ENCODE measurements at regions of chr11 and their contacts with region 1.

Region 1: GRCh38 chr11:66842896-66843775 is at the start of gene RCE1:
- DNase-seq: peak; percentile 86 to 96 (median 91)
- ATAC-seq: peak; percentile 96
- H3K4me3 ChIP-seq: peak within 1 kb of the TSS; percentile 94
- H3K4me3 Mint-ChIP-seq: peak within 1 kb of the TSS; percentile 87 to 97 (median 93)
- H3K27ac ChIP-seq: peak within 1 kb of the TSS; percentile 96
- H3K27ac Mint-ChIP-seq: peak within 1 kb of the TSS; percentile 74 to 97 (median 92)
- H3K4me1 ChIP-seq: peaks cover 31 to 47% of the 10 kb centered on the region in 2 donors
- H3K4me1 Mint-ChIP-seq: peaks cover 31 to 58% (median 47%) of the 10 kb centered on the region in 7 donors
- H3K27me3 ChIP-seq: no peaks in the 10 kb centered on the region
- H3K27me3 Mint-ChIP-seq: no peaks in the 10 kb centered on the region
- total RNA-seq, gene RCE1: 24.6 to 47.1 (median 33.6) TPM

Region 2: GRCh38 chr11:65802841-65803240 is 1040.3 kb before region 1 on chr11:
- CTCF ChIA-PET with region 1: no interaction called
- POLR2A ChIA-PET with region 1: no interaction called
- intact Hi-C with region 1: no loop called
- DNase-seq: no peak
- ATAC-seq: no peak
- H3K4me3 ChIP-seq: no peak overlapping the region
- H3K4me3 Mint-ChIP-seq: no peak overlapping the region
- H3K27ac ChIP-seq: no peak overlapping the region
- H3K27ac Mint-ChIP-seq: no peak overlapping the region
- H3K4me1 ChIP-seq: no peaks in the 10 kb centered on the region
- H3K4me1 Mint-ChIP-seq: peaks cover 0 to 6% (median 0%) of the 10 kb centered on the region in 7 donors
- H3K27me3 ChIP-seq: peaks cover 3 to 9% of the 10 kb centered on the region in 2 donors
- H3K27me3 Mint-ChIP-seq: peaks cover 14 to 40% (median 37%) of the 10 kb centered on the region in 5 donors

Region 3: DNA sequence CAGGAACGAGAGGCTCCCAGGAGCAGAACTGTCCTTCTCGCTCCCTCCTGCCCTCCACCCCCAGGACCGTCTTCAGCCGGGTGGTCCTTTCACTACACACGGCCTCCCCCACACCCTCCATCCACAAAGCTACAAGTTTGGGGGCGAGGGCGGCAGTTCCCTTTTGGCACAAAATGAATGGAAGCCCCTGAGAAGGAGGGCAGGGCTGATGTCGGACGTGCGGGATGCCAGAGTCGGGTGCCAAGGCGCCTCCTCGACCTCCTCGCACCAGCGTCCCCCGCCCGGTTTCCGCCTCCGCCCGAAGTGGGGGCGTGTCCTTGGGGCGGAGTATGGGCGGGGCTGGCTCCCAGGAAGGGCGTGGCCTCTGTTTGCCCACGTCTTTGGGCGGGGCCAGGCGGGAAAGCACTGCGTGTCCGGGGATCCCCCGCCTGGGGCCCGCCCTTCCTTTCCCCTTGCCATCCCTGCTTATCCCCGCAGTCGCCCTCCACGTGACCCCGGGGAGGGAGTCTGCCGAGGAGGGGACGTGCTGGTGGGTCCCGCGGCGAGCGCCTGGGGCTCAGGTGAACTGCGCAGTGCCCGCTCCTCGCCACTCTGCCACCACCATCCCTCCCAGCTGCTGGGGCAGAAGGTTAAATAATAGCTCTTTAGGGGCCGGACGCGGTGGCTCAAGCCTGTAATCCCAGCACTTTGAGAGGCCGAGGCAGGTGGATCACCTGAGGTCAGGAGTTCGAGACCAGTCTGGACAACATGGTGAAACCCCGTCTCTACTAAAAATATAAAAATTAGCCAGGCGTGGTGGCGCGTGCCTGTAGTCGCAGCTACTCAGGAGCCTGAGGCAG is 969.6 kb before region 1 on chr11:
- CTCF ChIA-PET with region 1: no interaction called
- POLR2A ChIA-PET with region 1: no interaction called
- intact Hi-C with region 1: loop called in 1 of 2 experiments (anchors 5 kb)
- DNase-seq: peak; percentile 93 to 100 (median 97)
- ATAC-seq: peak; percentile 99
- H3K4me3 ChIP-seq: peak overlapping the region; percentile 75
- H3K4me3 Mint-ChIP-seq: peak overlapping the region; percentile 84 to 97 (median 91)
- H3K27ac ChIP-seq: peak overlapping the region; percentile 88
- H3K27ac Mint-ChIP-seq: peak overlapping the region; percentile 71 to 92 (median 91)
- H3K4me1 ChIP-seq: peaks cover 10 to 22% of the 10 kb centered on the region in 2 donors
- H3K4me1 Mint-ChIP-seq: peaks cover 7 to 37% (median 18%) of the 10 kb centered on the region in 7 donors
- H3K27me3 ChIP-seq: no peaks in the 10 kb centered on the region
- H3K27me3 Mint-ChIP-seq: peaks cover 0 to 3% (median 0%) of the 10 kb centered on the region in 5 donors

Region 4: GRCh38 chr11:66638177-66639065 is 204.7 kb before region 1 on chr11 and contains the start of gene RBM4:
- CTCF ChIA-PET with region 1: no interaction called
- POLR2A ChIA-PET with region 1: interaction called, 4 read pairs
- intact Hi-C with region 1: loop called in 1 of 2 experiments (anchors 1 kb)
- DNase-seq: peak; percentile 80 to 99 (median 98)
- ATAC-seq: peak; percentile 93
- H3K4me3 ChIP-seq: peak within 1 kb of the TSS; percentile 91
- H3K4me3 Mint-ChIP-seq: peak within 1 kb of the TSS; percentile 92 to 100 (median 94)
- H3K27ac ChIP-seq: peak within 1 kb of the TSS; percentile 93
- H3K27ac Mint-ChIP-seq: peak within 1 kb of the TSS; percentile 87 to 98 (median 96)
- H3K4me1 ChIP-seq: peaks cover 44 to 48% of the 10 kb centered on the region in 2 donors
- H3K4me1 Mint-ChIP-seq: peaks cover 45 to 73% (median 68%) of the 10 kb centered on the region in 7 donors
- H3K27me3 ChIP-seq: no peaks in the 10 kb centered on the region
- H3K27me3 Mint-ChIP-seq: no peaks in the 10 kb centered on the region
- total RNA-seq, gene RBM4: 139 to 239 (median 198) TPM

Region 5: DNA sequence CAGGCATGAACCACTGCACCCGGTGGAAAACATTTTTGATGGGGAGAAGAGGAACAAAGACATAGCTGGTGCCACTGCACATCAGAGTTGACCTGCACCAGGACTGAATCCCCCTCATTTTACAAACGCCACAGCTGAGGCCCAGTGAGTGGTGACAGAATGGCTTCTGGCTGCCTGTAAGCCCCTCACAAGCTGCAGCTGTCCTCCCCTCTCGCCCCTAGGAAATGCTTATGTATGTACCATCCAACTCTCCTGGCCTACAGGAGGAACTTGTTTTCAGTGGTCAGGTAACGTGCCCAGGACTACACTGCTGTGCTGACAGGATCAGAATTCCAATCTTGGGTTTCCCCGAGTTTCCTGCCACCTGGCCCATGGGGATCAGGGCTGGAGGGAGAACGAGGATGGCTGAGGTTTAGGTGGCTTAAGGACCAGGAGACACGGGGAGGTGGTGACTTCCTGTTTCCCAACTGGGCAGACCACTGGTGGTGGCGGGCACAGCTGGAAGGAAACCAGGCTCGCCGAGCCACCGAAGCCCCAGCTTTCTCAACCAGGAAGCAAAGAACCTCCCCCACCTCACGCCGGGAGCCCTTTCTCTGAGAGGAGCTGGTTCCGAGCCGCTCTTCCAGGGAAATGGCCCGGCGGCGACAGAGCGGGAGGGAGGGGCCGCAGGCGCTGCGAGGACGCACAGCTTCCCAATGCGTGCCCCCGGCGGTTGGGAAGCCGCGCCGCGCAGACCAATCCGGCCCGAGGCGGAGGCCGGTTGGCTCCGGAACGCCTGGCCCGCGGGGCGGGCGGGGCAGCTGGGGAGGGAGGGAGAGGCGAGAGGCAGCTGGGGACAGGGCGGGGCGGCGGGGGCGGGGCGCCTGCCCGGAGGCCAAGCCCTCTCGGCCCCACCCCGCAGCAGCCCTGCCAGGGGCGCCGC is 12.7 kb after region 1 on chr11:
- CTCF ChIA-PET with region 1: interaction called, 4 read pairs
- POLR2A ChIA-PET with region 1: interaction called, 47 read pairs
- intact Hi-C with region 1: loop called (anchors 1 kb)
- DNase-seq: peak in 3 of 9 donors; percentile 17 to 91 (median 55)
- ATAC-seq: peak; percentile 85
- H3K4me3 ChIP-seq: peak overlapping the region; percentile 71
- H3K4me3 Mint-ChIP-seq: peak overlapping the region; percentile 71 to 89 (median 85)
- H3K27ac ChIP-seq: peak overlapping the region; percentile 14
- H3K27ac Mint-ChIP-seq: peak overlapping the region in 6 of 9 donors; percentile 28 to 90 (median 54)
- H3K4me1 ChIP-seq: peaks cover 0 to 6% of the 10 kb centered on the region in 2 donors
- H3K4me1 Mint-ChIP-seq: peaks cover 0 to 26% (median 9%) of the 10 kb centered on the region in 7 donors
- H3K27me3 ChIP-seq: no peaks in the 10 kb centered on the region
- H3K27me3 Mint-ChIP-seq: no peaks in the 10 kb centered on the region

Region 6: DNA sequence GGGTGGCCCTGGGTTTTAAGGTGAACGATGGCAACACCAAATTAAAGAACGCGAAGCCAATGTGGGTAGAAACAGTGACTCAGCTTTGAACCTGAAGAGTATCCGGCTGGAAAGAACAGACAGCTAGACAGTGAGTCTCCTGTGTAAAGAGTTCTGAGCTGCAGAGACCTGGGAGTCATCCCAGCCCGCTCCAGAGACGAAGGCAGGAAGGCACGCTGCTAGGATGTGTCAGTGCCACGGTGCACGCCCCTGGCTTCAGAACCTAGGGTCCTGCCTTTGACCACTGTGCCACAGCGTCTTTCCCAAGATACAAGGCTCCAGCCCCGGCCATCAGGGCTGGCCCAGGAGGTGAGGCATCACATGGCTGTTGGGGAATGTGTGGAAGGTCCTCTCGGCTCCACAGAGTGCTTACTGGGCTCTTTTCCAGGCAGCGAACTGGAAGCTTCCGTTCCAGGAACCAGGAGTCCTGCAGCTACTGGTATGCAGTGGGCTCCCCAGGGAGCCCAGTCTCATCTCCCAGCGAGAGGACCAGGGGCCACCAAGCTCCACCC is 43.6 kb after region 1 on chr11:
- CTCF ChIA-PET with region 1: no interaction called
- POLR2A ChIA-PET with region 1: no interaction called
- intact Hi-C with region 1: no loop called
- DNase-seq: no peak
- ATAC-seq: no peak
- H3K4me3 ChIP-seq: no peak overlapping the region
- H3K4me3 Mint-ChIP-seq: no peak overlapping the region
- H3K27ac ChIP-seq: no peak overlapping the region
- H3K27ac Mint-ChIP-seq: no peak overlapping the region
- H3K4me1 ChIP-seq: no peaks in the 10 kb centered on the region
- H3K4me1 Mint-ChIP-seq: peaks cover 0 to 14% (median 2%) of the 10 kb centered on the region in 7 donors
- H3K27me3 ChIP-seq: no peaks in the 10 kb centered on the region
- H3K27me3 Mint-ChIP-seq: no peaks in the 10 kb centered on the region

Region 7: GRCh38 chr11:67118801-67119584 is 275.9 kb after region 1 on chr11 and contains the start of gene KDM2A:
- CTCF ChIA-PET with region 1: no interaction called
- POLR2A ChIA-PET with region 1: interaction called, 3 read pairs
- intact Hi-C with region 1: loop called (anchors 2 to 5 kb)
- DNase-seq: peak; percentile 93 to 100 (median 98)
- ATAC-seq: peak; percentile 92
- H3K4me3 ChIP-seq: peak within 1 kb of the TSS; percentile 86
- H3K4me3 Mint-ChIP-seq: peak within 1 kb of the TSS; percentile 95 to 99 (median 98)
- H3K27ac ChIP-seq: peak within 1 kb of the TSS; percentile 98
- H3K27ac Mint-ChIP-seq: peak within 1 kb of the TSS; percentile 84 to 98 (median 95)
- H3K4me1 ChIP-seq: peaks cover 3 to 7% of the 10 kb centered on the region in 2 donors
- H3K4me1 Mint-ChIP-seq: peaks cover 25 to 48% (median 40%) of the 10 kb centered on the region in 7 donors
- H3K27me3 ChIP-seq: no peaks in the 10 kb centered on the region
- H3K27me3 Mint-ChIP-seq: peaks cover 0 to 5% (median 0%) of the 10 kb centered on the region in 5 donors
- total RNA-seq, gene KDM2A: 146 to 298 (median 233) TPM